Psoas muscle (tissue), 8 donors: ENCODE measurements at regions of chr7 and their contacts with region 1.

Region 1: DNA sequence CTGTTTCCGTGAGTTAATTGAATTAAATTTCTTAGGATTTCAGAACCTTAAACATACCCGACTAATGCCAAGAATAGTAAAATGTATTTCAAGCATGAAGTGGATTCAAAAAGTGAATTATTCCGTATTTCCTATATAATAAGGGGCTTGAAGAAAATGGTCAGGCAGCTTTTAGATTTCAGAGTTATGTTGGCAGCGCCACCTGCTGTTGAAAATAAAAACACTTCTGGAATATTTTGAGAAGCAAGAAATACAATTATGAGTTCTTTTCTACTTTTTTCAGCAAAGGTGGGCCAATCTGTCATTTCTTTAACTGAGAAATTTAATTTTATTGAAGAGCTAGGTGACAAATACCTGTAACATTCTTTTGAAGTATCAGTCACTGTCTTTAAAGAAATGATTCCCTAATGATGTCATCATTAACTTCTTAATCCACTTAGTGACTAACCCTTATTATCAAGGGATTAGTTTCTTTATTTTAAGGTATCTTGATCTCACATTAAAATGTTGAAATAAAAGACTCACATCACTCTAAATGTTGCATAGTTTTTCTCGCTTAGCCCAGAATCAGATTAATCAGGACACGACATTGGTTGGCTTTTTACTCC is 36.6 kb upstream of the AGR3 start:
- DNase-seq: no peak
- ATAC-seq: no peak
- H3K4me3 ChIP-seq: no peak overlapping the region
- H3K27ac ChIP-seq: no peak overlapping the region
- H3K4me1 ChIP-seq: no peaks in the 10 kb centered on the region
- H3K27me3 ChIP-seq: no peaks in the 10 kb centered on the region
- CTCF ChIP-seq: peak; percentile 78

Region 2: DNA sequence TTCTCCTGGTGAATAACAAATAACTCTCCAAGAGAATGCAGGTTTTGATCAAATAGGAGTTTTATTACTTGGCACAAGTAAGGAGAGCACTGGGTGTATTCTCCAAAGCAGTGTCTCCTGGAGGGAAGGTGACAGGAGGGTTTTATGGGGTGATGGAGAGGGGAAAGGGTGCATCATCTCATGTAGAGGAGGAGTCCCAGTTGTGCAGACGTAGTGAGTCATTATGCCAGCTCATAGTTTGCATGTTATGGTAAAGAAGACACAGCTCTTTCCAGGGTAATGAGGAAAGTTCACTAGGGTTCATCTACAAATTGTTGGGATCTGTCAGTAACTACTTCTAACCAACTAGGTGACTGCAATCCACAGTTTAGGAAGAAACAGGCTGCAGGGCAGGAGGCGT is 884.0 kb before region 1 on chr7:
- intact Hi-C with region 1: no loop called
- DNase-seq: no peak
- ATAC-seq: no peak
- H3K4me3 ChIP-seq: no peak overlapping the region
- H3K27ac ChIP-seq: no peak overlapping the region
- H3K4me1 ChIP-seq: no peaks in the 10 kb centered on the region
- H3K27me3 ChIP-seq: no peaks in the 10 kb centered on the region
- CTCF ChIP-seq: no peak

Region 3: DNA sequence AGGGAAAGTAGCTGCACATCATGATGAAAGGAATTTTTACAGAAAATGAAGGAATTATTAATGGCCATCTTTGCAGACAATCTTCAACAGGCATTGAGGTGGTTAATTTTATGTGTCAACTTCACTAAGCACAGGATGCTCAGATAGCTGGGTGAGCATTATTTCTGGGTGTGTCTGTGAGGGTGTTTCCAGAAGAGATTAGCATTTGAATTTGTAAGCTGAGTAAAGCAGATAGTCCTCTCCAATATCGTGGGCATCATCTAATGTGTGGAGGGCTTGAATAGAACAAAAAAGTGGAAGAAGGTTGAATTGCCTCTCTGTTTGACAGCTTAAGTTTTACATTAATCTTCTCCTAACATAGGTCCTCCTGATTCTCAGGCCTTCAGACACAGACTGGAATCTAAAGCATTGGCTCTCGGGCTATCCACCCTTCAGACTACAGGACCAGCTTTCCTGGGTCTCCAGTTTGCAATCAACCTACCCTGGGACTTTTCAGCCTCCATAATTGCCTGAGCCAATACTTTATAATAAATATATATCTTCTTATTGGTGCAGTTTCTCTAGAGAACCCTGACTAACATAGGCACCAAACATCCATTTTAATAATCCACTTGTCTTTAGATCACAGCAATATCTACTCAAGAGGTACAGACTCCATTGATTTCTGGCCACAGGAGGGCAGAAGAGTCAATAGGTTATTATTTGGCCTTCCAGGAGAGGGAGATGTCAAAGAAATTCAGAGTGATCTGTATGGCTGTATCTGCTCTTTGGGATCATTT is 486.6 kb before region 1 on chr7:
- intact Hi-C with region 1: loop called in 1 of 2 experiments (anchors 10 kb)
- DNase-seq: no peak
- ATAC-seq: peak in 3 of 4 donors; percentile 48 to 62 (median 55)
- H3K4me3 ChIP-seq: no peak overlapping the region
- H3K27ac ChIP-seq: no peak overlapping the region
- H3K4me1 ChIP-seq: no peaks in the 10 kb centered on the region
- H3K27me3 ChIP-seq: no peaks in the 10 kb centered on the region
- CTCF ChIP-seq: peak; percentile 50

Region 4: GRCh38 chr7:16604054-16604453 is 314.3 kb before region 1 on chr7:
- intact Hi-C with region 1: loop called (anchors 2 to 5 kb)
- DNase-seq: no peak
- ATAC-seq: peak in 2 of 4 donors; percentile 45 to 63
- H3K4me3 ChIP-seq: no peak overlapping the region
- H3K27ac ChIP-seq: no peak overlapping the region
- H3K4me1 ChIP-seq: no peaks in the 10 kb centered on the region
- H3K27me3 ChIP-seq: no peaks in the 10 kb centered on the region
- CTCF ChIP-seq: peak; percentile 47

Region 5: DNA sequence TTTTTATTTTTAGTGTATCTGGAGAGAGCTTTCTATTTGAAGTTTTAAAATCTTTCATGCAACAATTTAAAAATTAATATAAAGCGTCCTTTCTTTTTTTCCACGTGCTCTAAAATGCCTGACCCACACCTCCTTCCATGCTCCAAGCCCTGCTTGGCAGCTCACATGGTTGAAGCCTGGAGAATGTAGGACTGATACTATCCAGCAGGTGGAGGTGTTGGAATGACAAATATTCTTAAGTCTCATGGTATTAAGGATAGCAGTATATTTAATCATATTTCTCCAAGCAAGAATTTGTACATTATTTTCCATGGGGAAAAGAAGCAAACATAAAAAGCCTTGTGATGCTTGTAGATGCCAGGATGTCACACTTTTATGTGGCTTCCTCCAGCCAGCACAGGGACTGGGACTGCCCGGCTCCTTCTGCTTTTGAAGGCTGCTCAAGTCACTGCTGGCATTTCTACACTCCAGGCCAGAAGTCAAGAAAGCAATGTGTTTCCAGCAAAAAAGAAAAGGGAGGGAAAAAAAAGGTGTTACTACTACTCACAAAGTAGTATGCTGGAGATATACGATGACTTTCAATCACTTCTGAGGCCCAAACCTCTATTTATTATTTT is 222.7 kb before region 1 on chr7:
- intact Hi-C with region 1: loop called (anchors 5 kb)
- DNase-seq: no peak
- ATAC-seq: no peak
- H3K4me3 ChIP-seq: no peak overlapping the region
- H3K27ac ChIP-seq: no peak overlapping the region
- H3K4me1 ChIP-seq: no peaks in the 10 kb centered on the region
- H3K27me3 ChIP-seq: no peaks in the 10 kb centered on the region
- CTCF ChIP-seq: peak; percentile 33

Region 6: GRCh38 chr7:16803887-16804673 is 114.3 kb before region 1 on chr7:
- intact Hi-C with region 1: loop called in 1 of 2 experiments (anchors 2 kb)
- DNase-seq: no peak
- ATAC-seq: no peak
- H3K4me3 ChIP-seq: no peak overlapping the region
- H3K27ac ChIP-seq: no peak overlapping the region
- H3K4me1 ChIP-seq: no peaks in the 10 kb centered on the region
- H3K27me3 ChIP-seq: no peaks in the 10 kb centered on the region
- CTCF ChIP-seq: no peak

Region 7: GRCh38 chr7:17307558-17307957 is 389.2 kb after region 1 on chr7:
- intact Hi-C with region 1: no loop called
- DNase-seq: no peak
- ATAC-seq: no peak
- H3K4me3 ChIP-seq: no peak overlapping the region
- H3K27ac ChIP-seq: no peak overlapping the region
- H3K4me1 ChIP-seq: no peaks in the 10 kb centered on the region
- H3K27me3 ChIP-seq: no peaks in the 10 kb centered on the region
- CTCF ChIP-seq: no peak